Body of pancreas (tissue), 4 donors: ENCODE measurements at regions of chr5 and their contacts with region 1.

Region 1: GRCh38 chr5:173287086-173287485 is 41.1 kb downstream of the STC2 start:
- DNase-seq: no peak
- ATAC-seq: no peak
- H3K4me3 ChIP-seq: no peak overlapping the region
- H3K27ac ChIP-seq: no peak overlapping the region
- H3K4me1 ChIP-seq: peaks cover 10% of the 10 kb centered on the region
- H3K27me3 ChIP-seq: no peaks in the 10 kb centered on the region
- CTCF ChIP-seq: no peak
- POLR2A ChIP-seq: no peak

Region 2: GRCh38 chr5:173331956-173332479 is 44.9 kb after region 1 on chr5:
- intact Hi-C with region 1: loop called (anchors 5 kb)
- DNase-seq: peak; percentile 93 to 97 (median 94)
- ATAC-seq: peak; percentile 79
- H3K4me3 ChIP-seq: no peak overlapping the region
- H3K27ac ChIP-seq: no peak overlapping the region
- H3K4me1 ChIP-seq: peaks cover 36% of the 10 kb centered on the region
- H3K27me3 ChIP-seq: no peaks in the 10 kb centered on the region
- CTCF ChIP-seq: peak; percentile 80 to 98 (median 98)
- POLR2A ChIP-seq: no peak